ENCODE measurements at regions of chr15 and their contacts with region 1.

Region 1: DNA sequence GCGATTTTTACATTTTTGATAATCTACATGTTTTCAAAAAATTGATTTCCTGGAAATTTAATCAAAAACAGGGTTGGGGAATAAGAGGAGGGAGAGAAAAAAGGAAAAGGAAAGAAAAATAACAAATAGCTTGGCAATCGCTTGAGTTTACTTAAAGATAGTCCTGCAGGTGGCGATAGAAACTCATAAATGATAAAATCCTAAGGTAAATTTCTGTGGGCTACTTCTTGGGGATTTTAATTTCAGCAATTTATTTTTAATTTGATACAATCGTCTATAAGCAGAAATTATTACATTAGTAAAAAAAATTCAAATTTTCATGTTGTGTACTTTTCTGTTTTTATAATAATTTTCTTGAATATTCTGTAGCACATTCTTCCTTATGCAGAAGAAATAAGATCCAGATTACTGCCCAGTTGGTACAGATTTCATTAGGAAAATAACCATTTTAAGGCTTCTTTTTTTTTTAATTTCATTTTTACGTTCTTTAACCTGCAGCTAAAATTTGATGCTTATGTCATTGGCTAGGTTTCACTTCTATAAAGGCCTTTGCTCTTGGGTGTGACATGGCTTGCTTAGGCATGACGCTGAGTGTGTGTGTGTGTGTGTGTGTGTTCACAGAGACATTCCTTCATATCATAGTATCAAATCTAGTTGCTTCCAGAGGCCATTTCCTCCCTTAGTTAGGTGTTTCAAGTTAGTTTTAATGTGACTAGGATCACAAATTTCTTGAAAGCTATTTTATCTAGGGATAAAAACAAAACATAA is 181.8 kb downstream of the MCTP2 start:
- DNase-seq: no peak
- H3K4me3 ChIP-seq: no peak overlapping the region
- H3K27ac ChIP-seq: peak overlapping the region in 1 of 4 donors; percentile 33
- H3K4me1 ChIP-seq: peaks cover 0 to 71% (median 12%) of the 10 kb centered on the region in 4 donors
- H3K27me3 ChIP-seq: no peaks in the 10 kb centered on the region
- CTCF ChIP-seq: peak; percentile 23 to 54 (median 50)
- EP300 ChIP-seq: no peak
- POLR2A ChIP-seq: no peak

Region 2: DNA sequence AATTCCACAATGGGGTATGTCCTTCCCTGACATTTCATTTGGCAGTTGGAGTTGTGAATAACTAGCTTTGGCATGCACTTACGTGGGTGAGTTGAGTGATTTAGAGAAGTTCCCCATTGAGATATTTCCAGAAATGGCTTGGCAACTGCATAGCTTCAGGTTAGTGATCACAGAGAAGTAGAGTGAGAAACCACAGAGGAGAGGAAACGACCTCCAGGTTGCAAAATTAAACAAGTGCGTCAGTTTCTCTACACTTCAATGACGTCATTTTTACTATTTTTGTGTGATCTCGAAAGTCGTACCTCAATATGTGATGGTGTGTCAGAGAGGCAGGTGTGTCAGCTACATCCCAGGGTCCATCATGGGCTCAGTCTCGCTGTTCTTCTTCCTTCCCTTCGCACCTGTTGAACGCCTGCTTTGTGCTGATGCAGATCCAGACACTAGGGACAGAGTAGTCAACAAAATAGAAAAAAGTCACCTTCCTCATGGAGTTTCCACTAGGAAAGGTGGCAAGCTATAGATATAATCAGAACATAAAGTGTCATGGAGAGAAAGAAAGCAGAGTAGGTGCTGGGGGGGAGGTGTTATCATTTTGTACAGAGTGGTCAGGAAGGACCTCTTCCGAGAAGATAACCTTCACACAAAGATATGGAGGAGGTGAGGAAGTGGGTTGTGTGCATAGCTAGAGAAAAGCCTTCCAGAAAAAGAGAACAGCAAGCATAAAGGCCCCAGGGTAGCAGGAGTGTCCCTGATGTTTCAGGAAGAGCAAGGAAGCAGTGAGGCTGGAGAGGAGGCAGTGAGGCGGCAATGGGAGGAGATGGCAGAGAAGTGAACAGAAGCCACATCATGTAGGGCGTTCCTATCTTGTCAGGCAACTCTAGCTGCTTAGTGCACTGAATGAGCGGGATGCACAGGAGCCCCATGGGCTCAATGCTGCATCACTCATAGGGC is 106.2 kb before region 1 on chr15:
- intact Hi-C with region 1: no loop called
- DNase-seq: no peak
- H3K4me3 ChIP-seq: no peak overlapping the region
- H3K27ac ChIP-seq: no peak overlapping the region
- H3K4me1 ChIP-seq: peaks cover 0 to 4% (median 0%) of the 10 kb centered on the region in 4 donors
- H3K27me3 ChIP-seq: no peaks in the 10 kb centered on the region
- CTCF ChIP-seq: no peak
- EP300 ChIP-seq: no peak
- POLR2A ChIP-seq: no peak

Region 3: DNA sequence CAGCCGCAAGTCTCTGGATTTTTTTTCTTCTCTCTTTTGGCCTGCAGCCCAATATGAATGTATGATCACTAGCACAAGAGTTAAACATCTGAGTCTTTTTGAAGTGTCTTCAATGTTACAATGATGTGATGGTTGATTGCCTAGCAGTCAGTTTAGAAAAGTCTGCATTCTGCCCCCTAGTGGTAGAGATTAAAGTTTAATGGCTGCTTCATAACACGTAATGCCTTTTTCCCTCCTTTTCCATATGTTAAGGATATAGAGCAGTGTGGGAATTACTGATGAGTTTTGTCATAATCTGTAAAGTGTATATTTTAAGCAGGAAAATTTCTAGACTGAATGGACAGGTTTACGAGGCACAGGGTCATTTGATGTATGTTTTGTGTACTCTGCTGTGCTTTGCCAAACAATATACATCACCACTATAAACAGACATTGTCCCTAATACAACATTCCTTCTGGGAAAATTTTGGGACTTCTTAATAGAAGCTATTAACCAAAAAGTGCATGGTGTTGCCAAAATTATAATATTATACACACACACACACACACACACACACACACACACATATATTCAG is 878.8 kb after region 1 on chr15:
- intact Hi-C with region 1: loop called (anchors 5 kb)
- DNase-seq: no peak
- H3K4me3 ChIP-seq: no peak overlapping the region
- H3K27ac ChIP-seq: no peak overlapping the region
- H3K4me1 ChIP-seq: peaks cover 0 to 18% (median 15%) of the 10 kb centered on the region in 4 donors
- H3K27me3 ChIP-seq: no peaks in the 10 kb centered on the region
- CTCF ChIP-seq: peak in 3 of 4 experiments; percentile 42 to 65 (median 62)
- EP300 ChIP-seq: no peak
- POLR2A ChIP-seq: no peak

Measured in sigmoid colon (tissue), 7 donors.